ENCODE measurements at regions of chr10 and their contacts with region 1.

Region 1: DNA sequence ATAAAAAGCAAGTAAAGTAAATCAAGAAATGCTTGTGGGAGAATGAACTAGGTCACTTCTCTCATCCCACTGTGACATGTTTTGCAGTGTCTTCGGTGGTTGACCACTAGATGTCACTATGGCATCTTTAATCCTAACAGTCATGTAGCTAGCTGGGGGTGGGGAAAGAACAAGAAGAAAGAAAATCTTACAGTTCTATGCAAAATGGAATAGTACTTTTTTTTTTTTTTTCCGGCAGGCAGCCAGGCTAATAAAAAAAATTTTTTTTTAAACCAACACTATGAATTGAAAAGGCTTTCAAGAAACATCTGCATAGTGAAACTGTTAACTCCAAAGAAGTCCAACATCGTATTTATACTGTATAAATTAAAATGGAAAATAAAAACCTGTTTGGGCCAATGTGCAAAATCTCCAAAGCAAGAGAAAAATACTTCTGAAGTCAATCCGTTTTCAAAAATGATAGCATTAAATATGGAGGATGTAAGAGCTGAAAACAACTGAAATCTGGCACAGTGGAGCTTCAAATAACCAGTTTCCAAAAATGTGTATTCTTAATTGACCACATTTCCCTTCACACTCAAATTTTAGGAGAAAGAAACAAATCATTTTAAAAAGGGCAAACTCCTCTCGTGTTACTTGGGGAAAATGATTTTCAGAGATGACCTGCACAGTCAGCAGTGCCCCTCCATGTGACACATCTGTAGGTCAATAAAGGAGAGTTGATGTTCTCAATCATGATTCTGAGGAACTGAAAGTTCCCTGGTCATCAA is 38.5 kb downstream of the CDK1 start:
- DNase-seq: peak in 2 of 5 donors; percentile 46 to 69
- ATAC-seq: peak; percentile 91 to 93 (median 92)
- H3K4me3 ChIP-seq: peak overlapping the region in 4 of 12 donors; percentile 2 to 14 (median 7)
- H3K27ac ChIP-seq: peak overlapping the region in 5 of 12 donors; percentile 28 to 67 (median 37)
- H3K4me1 ChIP-seq: peaks cover 0 to 36% (median 11%) of the 10 kb centered on the region in 12 donors
- H3K27me3 ChIP-seq: no peaks in the 10 kb centered on the region
- CTCF ChIP-seq: peak; percentile 64 to 87 (median 82)
- POLR2A ChIP-seq: no peak

Region 2: GRCh38 chr10:60646966-60647796 is 169.6 kb before region 1 on chr10:
- intact Hi-C with region 1: no loop called
- DNase-seq: peak in 1 of 5 donors; percentile 10
- ATAC-seq: peak in 1 of 4 donors; percentile 53
- H3K4me3 ChIP-seq: no peak overlapping the region
- H3K27ac ChIP-seq: no peak overlapping the region
- H3K4me1 ChIP-seq: peaks cover 0 to 3% (median 0%) of the 10 kb centered on the region in 12 donors
- H3K27me3 ChIP-seq: no peaks in the 10 kb centered on the region
- CTCF ChIP-seq: peak; percentile 64 to 83 (median 76)
- POLR2A ChIP-seq: no peak

Region 3: GRCh38 chr10:60848126-60848525 is 31.3 kb after region 1 on chr10:
- intact Hi-C with region 1: no loop called
- DNase-seq: peak in 4 of 5 donors; percentile 51 to 61 (median 54)
- ATAC-seq: peak; percentile 35 to 86 (median 73)
- H3K4me3 ChIP-seq: no peak overlapping the region
- H3K27ac ChIP-seq: peak overlapping the region in 9 of 12 donors; percentile 36 to 80 (median 59)
- H3K4me1 ChIP-seq: peaks cover 0 to 38% (median 17%) of the 10 kb centered on the region in 12 donors
- H3K27me3 ChIP-seq: no peaks in the 10 kb centered on the region
- CTCF ChIP-seq: peak in 4 of 12 donors; percentile 7 to 41 (median 24)
- POLR2A ChIP-seq: no peak

Region 4: DNA sequence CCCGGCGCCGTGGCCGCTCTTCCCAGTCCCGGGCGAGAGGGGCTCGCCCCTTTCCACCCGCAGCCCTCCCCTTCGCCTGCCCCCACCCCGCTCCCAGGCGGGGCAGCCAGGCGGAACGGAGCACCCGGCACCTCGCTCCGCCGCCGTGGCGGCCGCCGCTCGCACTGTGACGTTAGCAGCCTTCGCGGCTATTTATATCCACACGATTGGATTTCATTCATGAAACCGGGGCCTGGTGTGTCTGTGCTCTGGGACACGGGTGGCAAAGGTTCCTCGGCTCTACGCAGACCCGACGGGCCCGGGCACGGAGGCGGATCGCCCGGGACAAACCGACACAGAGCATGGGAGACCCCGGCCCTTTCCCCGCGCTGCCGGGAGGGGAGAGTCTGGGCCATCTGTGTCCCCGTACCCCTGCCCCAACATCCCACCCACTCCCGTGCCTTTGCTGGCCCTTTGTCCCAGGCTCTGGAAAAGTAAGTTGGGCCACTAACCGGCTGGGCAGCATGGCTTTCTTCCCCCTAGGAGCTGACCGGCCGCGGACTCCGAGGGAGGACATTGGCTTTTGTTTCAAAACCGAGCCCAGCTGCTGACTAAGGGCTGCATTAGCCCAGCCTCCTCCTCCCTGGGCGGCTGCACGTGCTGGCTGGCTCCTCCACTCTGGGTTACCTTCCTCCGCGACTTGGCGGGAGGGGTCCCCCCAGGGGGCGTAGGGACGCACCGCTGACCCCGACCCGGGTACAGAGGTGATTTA is 127.5 kb after region 1 on chr10 and contains the start of gene RHOBTB1:
- intact Hi-C with region 1: loop called in 4 of 10 experiments (anchors 5 kb)
- DNase-seq: peak; percentile 84 to 88 (median 88)
- ATAC-seq: peak; percentile 83 to 95 (median 92)
- H3K4me3 ChIP-seq: peak within 1 kb of the TSS; percentile 82 to 96 (median 90)
- H3K27ac ChIP-seq: peak within 1 kb of the TSS; percentile 96 to 100 (median 98)
- H3K4me1 ChIP-seq: peaks cover 0 to 33% (median 16%) of the 10 kb centered on the region in 12 donors
- H3K27me3 ChIP-seq: no peaks in the 10 kb centered on the region
- CTCF ChIP-seq: no peak
- POLR2A ChIP-seq: peak; percentile 14 to 88
- total RNA-seq, gene RHOBTB1: 9.6 to 41.3 (median 16.0) TPM

Region 5: GRCh38 chr10:61135276-61135721 is 318.5 kb after region 1 on chr10:
- intact Hi-C with region 1: loop called in 3 of 10 experiments (anchors 2 to 10 kb)
- DNase-seq: no peak
- ATAC-seq: no peak
- H3K4me3 ChIP-seq: no peak overlapping the region
- H3K27ac ChIP-seq: no peak overlapping the region
- H3K4me1 ChIP-seq: peaks cover 0 to 14% (median 0%) of the 10 kb centered on the region in 12 donors
- H3K27me3 ChIP-seq: no peaks in the 10 kb centered on the region
- CTCF ChIP-seq: no peak
- POLR2A ChIP-seq: no peak

Region 6: GRCh38 chr10:61175316-61175715 is 358.5 kb after region 1 on chr10:
- intact Hi-C with region 1: loop called in 1 of 10 experiments (anchors 10 kb)
- DNase-seq: no peak
- ATAC-seq: peak; percentile 59 to 93 (median 72)
- H3K4me3 ChIP-seq: no peak overlapping the region
- H3K27ac ChIP-seq: peak overlapping the region in 9 of 12 donors; percentile 16 to 63 (median 40)
- H3K4me1 ChIP-seq: peaks cover 0 to 30% (median 14%) of the 10 kb centered on the region in 12 donors
- H3K27me3 ChIP-seq: no peaks in the 10 kb centered on the region
- CTCF ChIP-seq: no peak
- POLR2A ChIP-seq: no peak

Region 7: DNA sequence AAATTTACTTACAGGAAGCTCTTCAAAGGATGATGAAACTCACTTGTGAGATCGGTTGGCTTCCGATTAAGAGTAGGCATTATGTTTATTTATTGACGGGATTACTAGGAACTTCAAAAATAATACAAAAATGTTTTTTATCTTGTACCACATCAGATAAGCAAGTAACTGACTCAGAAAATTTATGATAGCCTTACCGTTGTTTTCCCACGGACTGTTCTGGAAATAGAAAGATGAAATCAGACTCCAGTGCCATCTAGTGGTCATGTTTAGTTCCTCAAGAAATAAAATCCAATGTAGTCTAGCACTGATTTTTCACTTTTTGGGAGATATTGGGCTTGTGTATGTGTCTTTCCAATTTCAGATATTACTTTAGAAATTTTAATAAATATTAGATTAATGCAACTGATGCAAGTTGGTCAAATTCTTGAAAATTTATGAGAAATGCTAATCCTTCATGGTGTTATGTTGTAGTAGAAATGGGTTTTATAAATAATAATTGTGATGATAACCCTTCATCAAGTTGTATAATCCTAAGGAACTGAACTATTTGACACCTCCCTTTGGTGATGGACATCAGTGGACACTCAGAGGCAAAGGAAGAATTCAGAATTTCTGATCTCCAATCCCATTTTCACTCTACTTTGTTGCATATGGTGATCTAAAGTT is 467.5 kb after region 1 on chr10:
- intact Hi-C with region 1: loop called (anchors 1 to 5 kb)
- DNase-seq: peak in 1 of 5 donors; percentile 10
- ATAC-seq: peak in 1 of 4 donors; percentile 67
- H3K4me3 ChIP-seq: peak overlapping the region in 2 of 12 donors; percentile 6 to 31
- H3K27ac ChIP-seq: no peak overlapping the region
- H3K4me1 ChIP-seq: peaks cover 0 to 14% (median 0%) of the 10 kb centered on the region in 12 donors
- H3K27me3 ChIP-seq: no peaks in the 10 kb centered on the region
- CTCF ChIP-seq: peak; percentile 67 to 92 (median 77)
- POLR2A ChIP-seq: no peak

Region 8: DNA sequence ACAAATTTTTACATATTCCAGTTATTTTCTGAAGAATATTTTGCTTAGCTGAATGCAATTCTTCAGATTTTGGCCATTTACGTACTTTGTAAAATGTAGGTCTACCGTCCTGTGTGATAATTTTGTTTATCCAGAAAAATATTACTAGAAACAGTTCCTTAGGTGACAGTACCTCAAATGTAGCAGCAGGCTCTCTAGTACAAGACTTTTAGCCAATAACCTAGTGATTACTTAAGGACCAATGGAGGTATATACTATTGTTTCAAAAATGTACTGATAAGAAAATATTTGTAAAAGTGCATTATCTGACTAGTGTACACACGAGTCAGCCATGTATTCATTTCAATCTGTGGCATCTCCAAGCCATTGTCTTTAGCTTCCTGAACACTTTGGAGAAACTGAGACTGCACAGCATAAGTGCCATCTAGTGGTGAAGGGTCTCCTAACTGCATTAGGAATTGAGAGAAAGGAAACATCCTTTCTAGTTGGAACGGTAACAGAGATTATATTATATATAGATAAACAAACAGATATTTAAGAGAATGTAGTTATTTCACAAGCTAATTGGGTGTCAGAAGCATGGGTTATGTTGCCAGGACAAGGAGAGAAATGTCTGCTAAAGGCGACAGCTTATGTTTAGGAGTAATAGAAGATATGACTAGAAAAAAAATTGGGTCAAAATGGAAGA is 1428.1 kb after region 1 on chr10:
- intact Hi-C with region 1: loop called in 1 of 10 experiments (anchors 10 kb)
- DNase-seq: peak in 2 of 5 donors; percentile 56 to 57
- ATAC-seq: peak in 3 of 4 donors; percentile 80 to 88 (median 85)
- H3K4me3 ChIP-seq: peak overlapping the region in 3 of 12 donors; percentile 14 to 48 (median 31)
- H3K27ac ChIP-seq: peak overlapping the region in 2 of 12 donors; percentile 7 to 85
- H3K4me1 ChIP-seq: peaks cover 0 to 38% (median 6%) of the 10 kb centered on the region in 12 donors
- H3K27me3 ChIP-seq: no peaks in the 10 kb centered on the region
- CTCF ChIP-seq: peak; percentile 80 to 96 (median 88)
- POLR2A ChIP-seq: no peak

Measured in heart left ventricle (tissue), 16 donors.